GM18951 (cell line): ENCODE measurements at regions of chr3 and their contacts with region 1.

Region 1: GRCh38 chr3:168213920-168214319 is 118.2 kb upstream of the GOLIM4 start:
- POLR2A ChIP-seq: no peak

Region 2: DNA sequence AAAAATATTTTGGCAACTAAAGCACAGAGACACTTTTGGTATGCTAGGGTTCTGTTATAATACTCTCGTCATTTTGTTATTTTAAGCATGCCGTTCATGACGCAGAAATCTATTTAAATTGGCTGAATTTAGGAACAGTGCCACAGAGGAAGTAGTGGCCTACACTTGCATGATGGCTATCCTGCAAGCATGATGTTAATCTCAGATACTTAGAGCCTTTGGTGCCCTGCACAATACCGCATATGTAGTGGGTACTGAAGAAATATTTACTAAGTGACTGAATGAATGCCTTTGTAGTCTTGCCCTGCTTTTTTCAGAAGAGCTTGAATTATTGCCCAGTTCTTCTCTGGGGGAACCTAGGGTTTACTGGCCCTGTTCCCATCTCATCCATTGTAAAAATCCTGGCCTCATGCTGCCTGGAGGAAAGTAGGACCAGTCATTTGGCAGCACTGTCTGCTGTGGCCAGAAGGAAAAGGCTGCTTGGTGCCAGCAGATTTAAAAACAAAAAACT is 399.4 kb before region 1 on chr3:
- in situ Hi-C with region 1: no loop called
- POLR2A ChIP-seq: no peak

Region 3: GRCh38 chr3:168250415-168250861 is 36.5 kb after region 1 on chr3:
- in situ Hi-C with region 1: no loop called
- POLR2A ChIP-seq: no peak

Region 4: DNA sequence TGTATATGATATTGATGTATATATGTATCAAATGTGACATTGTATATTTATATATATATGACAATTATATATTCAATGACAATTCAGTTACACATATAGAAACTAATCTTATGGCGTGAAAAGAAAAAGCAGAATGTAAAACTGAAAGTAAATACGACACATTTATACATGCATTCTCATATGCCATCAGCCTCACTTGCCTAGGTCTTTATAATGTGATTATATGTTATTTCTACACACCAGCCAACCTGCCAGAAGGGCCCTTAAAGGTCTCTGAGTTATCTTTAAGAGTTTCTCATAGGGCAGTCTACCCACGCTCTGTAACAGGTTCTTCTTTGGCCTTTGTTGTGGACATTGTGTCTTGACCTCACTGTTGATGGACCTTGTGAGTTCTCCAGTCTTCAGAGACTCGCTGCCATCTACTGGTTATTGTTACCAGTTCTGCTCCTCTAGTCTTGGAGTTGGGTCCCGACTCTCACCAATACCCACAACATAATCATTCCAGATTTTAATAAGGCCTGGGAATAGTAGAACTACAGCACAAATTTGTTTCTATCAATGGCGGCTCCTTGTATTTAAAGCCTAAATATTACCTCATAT is 253.3 kb after region 1 on chr3:
- in situ Hi-C with region 1: loop called (anchors 25 kb)
- POLR2A ChIP-seq: no peak

Region 5: DNA sequence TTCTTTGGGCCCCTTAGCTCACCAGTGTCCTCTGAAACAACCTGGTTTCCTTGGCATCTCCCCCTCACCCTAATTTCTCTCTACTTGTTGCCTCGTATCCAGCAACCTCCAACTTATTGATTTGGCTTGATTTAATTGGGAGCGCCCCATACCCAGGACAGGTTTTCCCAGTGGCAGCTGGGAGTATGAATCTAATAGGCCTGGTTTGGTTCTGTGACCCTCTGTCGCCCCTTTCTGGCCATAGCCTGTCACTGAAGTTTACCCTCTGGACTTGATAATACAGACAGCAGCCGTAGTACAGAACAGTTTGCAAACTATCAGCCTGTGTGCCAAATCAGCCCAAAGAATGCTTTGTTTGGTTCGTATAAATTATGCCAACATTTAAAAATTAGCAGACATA is 406.9 kb after region 1 on chr3:
- in situ Hi-C with region 1: loop called (anchors 25 kb)
- POLR2A ChIP-seq: no peak

Region 6: DNA sequence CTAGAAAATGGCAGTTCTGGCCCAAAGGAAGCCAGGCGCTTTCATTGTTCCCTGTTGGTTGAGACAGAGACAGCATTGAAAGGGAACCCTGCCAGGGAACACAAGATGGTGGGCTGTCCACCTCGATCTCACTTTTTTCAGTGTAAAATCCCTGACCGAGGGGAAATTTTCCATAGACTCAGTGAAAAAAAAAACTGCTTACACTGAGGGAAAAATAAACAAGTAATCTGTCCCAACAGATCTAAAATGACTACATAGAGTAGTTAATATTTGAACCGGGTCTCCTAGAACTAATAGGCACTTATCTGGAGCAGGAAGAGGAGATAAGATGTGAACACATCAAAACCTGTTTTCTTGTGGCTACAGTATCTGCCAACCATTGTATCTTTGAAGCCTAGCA is 645.2 kb after region 1 on chr3:
- in situ Hi-C with region 1: loop called (anchors 10 kb)
- POLR2A ChIP-seq: no peak